ENCODE measurements at regions of chr2 and their contacts with region 1.

Region 1: DNA sequence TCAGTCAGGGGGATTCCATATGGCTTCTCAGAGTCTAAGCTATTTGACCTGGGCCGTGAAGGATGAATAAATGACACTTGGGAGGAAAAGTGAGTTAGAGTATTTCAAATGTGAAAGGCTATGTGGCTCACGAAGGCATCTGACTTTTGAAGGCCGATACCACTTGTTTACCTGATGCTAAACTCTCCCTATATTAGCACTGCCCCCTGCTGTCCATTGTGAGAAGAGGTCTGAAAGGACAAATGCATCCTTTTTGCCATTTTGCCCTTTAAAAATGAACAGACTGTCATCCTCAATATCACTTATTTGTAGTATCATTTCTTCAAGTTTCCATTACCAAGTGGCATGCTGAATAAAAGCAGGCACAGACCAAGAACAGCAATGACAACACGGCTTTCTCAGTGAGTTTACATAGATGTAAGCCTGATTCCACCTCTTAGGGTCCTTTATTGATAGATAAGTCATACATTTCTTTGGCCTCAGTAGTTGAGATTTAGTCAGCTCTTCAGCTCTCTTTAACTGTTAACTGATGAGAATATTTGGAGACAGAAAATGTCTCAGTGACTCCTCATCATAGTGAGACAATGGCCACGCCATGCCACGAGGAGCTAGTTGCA is 40.1 kb downstream of the DOCK10 start:
- DNase-seq: peak; percentile 89
- H3K4me3 Mint-ChIP-seq: peak overlapping the region; percentile 63
- H3K27ac Mint-ChIP-seq: peak overlapping the region; percentile 73
- H3K4me1 Mint-ChIP-seq: peaks cover 65% of the 10 kb centered on the region
- H3K27me3 Mint-ChIP-seq: no peaks in the 10 kb centered on the region

Region 2: GRCh38 chr2:224769489-224769888 is 232.7 kb before region 1 on chr2:
- intact Hi-C with region 1: no loop called
- DNase-seq: no peak
- H3K4me3 Mint-ChIP-seq: no peak overlapping the region
- H3K27ac Mint-ChIP-seq: no peak overlapping the region
- H3K4me1 Mint-ChIP-seq: peaks cover 16% of the 10 kb centered on the region
- H3K27me3 Mint-ChIP-seq: no peaks in the 10 kb centered on the region

Region 3: DNA sequence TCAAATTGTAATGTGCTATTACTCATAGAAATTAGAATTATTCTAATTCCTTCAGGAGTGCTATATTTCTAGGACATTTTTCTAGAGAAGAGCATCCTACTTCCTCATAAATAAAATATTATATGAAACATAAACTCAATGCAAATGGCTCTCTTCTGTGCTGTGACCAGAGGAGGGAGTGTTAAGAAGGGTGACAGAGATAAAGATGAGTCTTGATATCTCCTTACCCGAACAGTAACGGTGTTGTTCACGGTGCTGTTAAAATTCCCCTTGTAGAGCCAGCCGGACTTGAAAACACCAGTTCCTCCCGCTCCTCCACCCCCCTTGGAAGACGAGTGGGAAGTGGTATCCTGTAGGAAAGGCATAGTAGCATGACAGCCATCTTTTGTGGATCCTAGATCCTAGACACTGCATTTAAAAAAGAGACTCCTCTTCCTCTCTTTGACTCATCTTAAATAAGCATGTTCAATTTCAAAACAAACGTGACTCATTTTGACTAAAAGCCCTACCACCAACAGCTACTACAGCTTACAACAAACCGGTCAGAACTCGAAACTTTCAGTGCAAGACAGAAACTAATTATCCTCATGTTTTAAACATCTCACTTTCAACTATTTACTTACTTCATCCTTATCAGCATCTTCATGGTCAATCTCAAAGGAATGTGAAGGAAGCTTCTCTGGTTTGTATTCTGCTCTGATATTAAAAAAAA is 116.2 kb before region 1 on chr2:
- intact Hi-C with region 1: loop called (anchors 2 kb)
- DNase-seq: no peak
- H3K4me3 Mint-ChIP-seq: no peak overlapping the region
- H3K27ac Mint-ChIP-seq: peak overlapping the region; percentile 87
- H3K4me1 Mint-ChIP-seq: peaks cover 73% of the 10 kb centered on the region
- H3K27me3 Mint-ChIP-seq: no peaks in the 10 kb centered on the region

Region 4: DNA sequence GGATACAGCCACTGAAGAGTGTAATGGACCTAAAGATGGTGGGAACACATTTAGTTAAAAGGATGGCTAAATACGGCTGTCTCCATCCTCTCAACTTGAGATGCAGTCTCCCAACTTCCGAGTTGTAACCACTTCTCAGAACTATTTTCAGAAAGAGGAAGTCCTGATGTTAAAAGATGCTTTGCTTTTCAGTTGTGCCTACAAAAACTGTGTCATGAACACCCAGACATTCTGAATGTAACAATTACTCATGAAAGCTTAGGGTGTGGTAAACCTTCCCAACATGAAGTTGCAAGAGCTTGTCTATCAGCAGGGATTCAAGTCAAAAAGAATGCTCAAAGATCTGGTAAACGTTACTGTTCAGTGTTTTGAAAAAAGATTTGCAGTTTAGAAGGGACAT is 107.8 kb before region 1 on chr2:
- intact Hi-C with region 1: loop called (anchors 2 kb)
- DNase-seq: peak; percentile 67
- H3K4me3 Mint-ChIP-seq: peak overlapping the region; percentile 69
- H3K27ac Mint-ChIP-seq: peak overlapping the region; percentile 89
- H3K4me1 Mint-ChIP-seq: peaks cover 56% of the 10 kb centered on the region
- H3K27me3 Mint-ChIP-seq: no peaks in the 10 kb centered on the region

Region 5: GRCh38 chr2:224952936-224953657 is 49.0 kb before region 1 on chr2:
- intact Hi-C with region 1: loop called (anchors 2 kb)
- DNase-seq: peak; percentile 84
- H3K4me3 Mint-ChIP-seq: peak overlapping the region; percentile 66
- H3K27ac Mint-ChIP-seq: peak overlapping the region; percentile 66
- H3K4me1 Mint-ChIP-seq: peaks cover 71% of the 10 kb centered on the region
- H3K27me3 Mint-ChIP-seq: no peaks in the 10 kb centered on the region

Region 6: GRCh38 chr2:225660262-225661131 is 658.4 kb after region 1 on chr2:
- intact Hi-C with region 1: loop called (anchors 5 kb)
- DNase-seq: peak; percentile 90
- H3K4me3 Mint-ChIP-seq: no peak overlapping the region
- H3K27ac Mint-ChIP-seq: no peak overlapping the region
- H3K4me1 Mint-ChIP-seq: no peaks in the 10 kb centered on the region
- H3K27me3 Mint-ChIP-seq: peaks cover 19% of the 10 kb centered on the region